ENCODE measurements at regions of chr4 and their contacts with region 1.

Region 1: GRCh38 chr4:162163852-162164759 is at the start of gene FSTL5:
- DNase-seq: no peak
- H3K4me3 ChIP-seq: peak within 1 kb of the TSS; percentile 50
- CTCF ChIP-seq: no peak

Region 2: DNA sequence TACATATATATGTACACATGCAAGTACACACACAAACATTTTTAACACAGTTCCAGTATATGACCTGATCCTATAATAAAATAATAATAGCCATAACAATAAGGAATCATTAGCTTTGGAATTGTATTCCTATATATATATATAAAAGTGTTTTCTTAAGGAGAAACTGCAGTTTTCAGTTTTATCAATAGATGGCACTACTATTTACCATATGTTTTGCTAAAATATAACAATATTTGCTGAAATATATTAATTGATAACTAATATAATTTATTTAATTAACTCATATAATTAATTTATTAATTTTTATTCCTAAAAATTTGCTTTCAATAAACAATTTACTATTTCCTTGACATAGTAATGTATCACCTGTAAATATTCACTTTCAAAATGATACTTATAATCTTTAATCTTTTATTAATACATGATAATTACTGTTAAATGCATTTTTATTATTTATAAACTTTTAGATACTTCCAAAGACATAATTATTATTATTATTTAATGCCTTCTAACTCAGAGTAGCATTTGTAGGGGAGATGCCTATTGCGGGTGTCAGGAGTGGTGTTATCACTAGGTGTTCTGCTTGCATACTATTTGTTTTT is 599.8 kb before region 1 on chr4:
- CTCF ChIA-PET with region 1: interaction called, 10 read pairs
- POLR2A ChIA-PET with region 1: no interaction called
- DNase-seq: no peak
- H3K4me3 ChIP-seq: no peak overlapping the region
- CTCF ChIP-seq: no peak

Region 3: GRCh38 chr4:162201673-162202072 is 37.6 kb after region 1 on chr4:
- CTCF ChIA-PET with region 1: no interaction called
- POLR2A ChIA-PET with region 1: no interaction called
- DNase-seq: no peak
- H3K4me3 ChIP-seq: no peak overlapping the region
- CTCF ChIP-seq: no peak

Measured in AG04449 (cell line).